Naive thymus-derived CD4-positive, alpha-beta T cell (primary cell): ENCODE measurements at regions of chr17 and their contacts with region 1.

Region 1: GRCh38 chr17:58112970-58113631 is 29.9 kb downstream of the DYNLL2 start:
- DNase-seq: peak; percentile 62 to 86 (median 76)
- ATAC-seq: peak; percentile 96
- H3K4me3 ChIP-seq: no peak overlapping the region
- H3K4me3 Mint-ChIP-seq: no peak overlapping the region
- H3K27ac ChIP-seq: no peak overlapping the region
- H3K27ac Mint-ChIP-seq: peak overlapping the region in 1 of 9 donors; percentile 3
- H3K4me1 ChIP-seq: no peaks in the 10 kb centered on the region
- H3K4me1 Mint-ChIP-seq: peaks cover 0 to 5% (median 0%) of the 10 kb centered on the region in 7 donors
- H3K27me3 ChIP-seq: no peaks in the 10 kb centered on the region
- H3K27me3 Mint-ChIP-seq: peaks cover 0 to 16% (median 8%) of the 10 kb centered on the region in 5 donors

Region 2: GRCh38 chr17:57130761-57131461 is 982.2 kb before region 1 on chr17:
- CTCF ChIA-PET with region 1: no interaction called
- POLR2A ChIA-PET with region 1: no interaction called
- intact Hi-C with region 1: loop called in 1 of 2 experiments (anchors 1 kb)
- DNase-seq: peak; percentile 53 to 82 (median 75)
- ATAC-seq: peak; percentile 96
- H3K4me3 ChIP-seq: no peak overlapping the region
- H3K4me3 Mint-ChIP-seq: peak overlapping the region in 5 of 10 donors; percentile 14 to 53 (median 46)
- H3K27ac ChIP-seq: no peak overlapping the region
- H3K27ac Mint-ChIP-seq: no peak overlapping the region
- H3K4me1 ChIP-seq: peaks cover 0 to 6% of the 10 kb centered on the region in 2 donors
- H3K4me1 Mint-ChIP-seq: peaks cover 4 to 11% (median 8%) of the 10 kb centered on the region in 7 donors
- H3K27me3 ChIP-seq: no peaks in the 10 kb centered on the region
- H3K27me3 Mint-ChIP-seq: no peaks in the 10 kb centered on the region

Region 3: DNA sequence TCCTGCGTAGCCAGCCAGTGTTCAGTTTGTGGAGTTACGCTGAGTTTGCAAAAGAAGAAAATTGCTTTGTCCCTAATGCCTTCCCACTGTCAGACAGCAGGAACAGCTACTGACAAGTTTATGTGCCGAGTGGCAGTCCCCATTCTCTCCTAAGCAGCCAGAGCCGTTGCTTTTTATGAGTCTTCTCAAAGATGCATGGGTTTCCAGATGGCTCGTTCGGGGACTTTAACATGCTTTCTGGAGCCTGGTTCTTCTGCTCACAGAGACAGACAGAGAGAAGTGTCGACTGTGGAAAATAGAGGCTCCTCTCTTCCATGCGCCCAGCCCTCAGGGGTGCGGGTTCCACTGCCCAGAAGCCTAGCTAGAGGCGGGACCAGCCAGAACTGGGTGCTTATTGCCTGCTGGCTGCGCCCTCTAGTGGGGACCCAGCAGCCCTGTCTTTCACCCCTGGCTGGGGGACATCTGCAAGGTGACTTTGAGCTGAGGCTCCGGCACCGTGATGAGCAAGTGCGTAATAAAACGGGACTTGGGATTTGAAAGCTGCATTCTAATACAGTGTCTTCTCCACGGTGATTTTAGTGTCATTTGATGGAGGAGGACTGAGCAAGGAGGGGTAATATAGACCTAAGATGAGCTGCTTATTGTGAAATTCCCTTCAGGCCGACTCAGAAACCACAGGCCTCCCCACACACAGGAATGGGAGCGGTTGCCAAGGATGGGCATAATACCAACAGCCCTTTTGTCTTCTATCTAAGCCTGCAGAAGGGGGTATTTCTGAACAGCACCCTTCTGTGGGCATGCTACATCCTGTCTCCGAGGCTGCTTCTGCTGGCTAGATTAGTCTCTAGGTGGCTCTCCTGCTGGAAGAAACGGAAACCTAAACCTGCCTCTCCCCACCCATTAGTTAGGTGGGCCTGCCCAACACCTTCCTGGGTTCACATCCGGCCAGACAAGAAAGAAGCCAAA is 441.2 kb before region 1 on chr17:
- CTCF ChIA-PET with region 1: no interaction called
- POLR2A ChIA-PET with region 1: no interaction called
- intact Hi-C with region 1: loop called in 1 of 2 experiments (anchors 2 kb)
- DNase-seq: peak; percentile 47 to 73 (median 61)
- ATAC-seq: peak; percentile 92
- H3K4me3 ChIP-seq: peak overlapping the region; percentile 31
- H3K4me3 Mint-ChIP-seq: peak overlapping the region in 5 of 10 donors; percentile 10 to 61 (median 29)
- H3K27ac ChIP-seq: no peak overlapping the region
- H3K27ac Mint-ChIP-seq: peak overlapping the region; percentile 10 to 84 (median 74)
- H3K4me1 ChIP-seq: peaks cover 6 to 29% of the 10 kb centered on the region in 2 donors
- H3K4me1 Mint-ChIP-seq: peaks cover 0 to 26% (median 14%) of the 10 kb centered on the region in 7 donors
- H3K27me3 ChIP-seq: no peaks in the 10 kb centered on the region
- H3K27me3 Mint-ChIP-seq: no peaks in the 10 kb centered on the region

Region 4: DNA sequence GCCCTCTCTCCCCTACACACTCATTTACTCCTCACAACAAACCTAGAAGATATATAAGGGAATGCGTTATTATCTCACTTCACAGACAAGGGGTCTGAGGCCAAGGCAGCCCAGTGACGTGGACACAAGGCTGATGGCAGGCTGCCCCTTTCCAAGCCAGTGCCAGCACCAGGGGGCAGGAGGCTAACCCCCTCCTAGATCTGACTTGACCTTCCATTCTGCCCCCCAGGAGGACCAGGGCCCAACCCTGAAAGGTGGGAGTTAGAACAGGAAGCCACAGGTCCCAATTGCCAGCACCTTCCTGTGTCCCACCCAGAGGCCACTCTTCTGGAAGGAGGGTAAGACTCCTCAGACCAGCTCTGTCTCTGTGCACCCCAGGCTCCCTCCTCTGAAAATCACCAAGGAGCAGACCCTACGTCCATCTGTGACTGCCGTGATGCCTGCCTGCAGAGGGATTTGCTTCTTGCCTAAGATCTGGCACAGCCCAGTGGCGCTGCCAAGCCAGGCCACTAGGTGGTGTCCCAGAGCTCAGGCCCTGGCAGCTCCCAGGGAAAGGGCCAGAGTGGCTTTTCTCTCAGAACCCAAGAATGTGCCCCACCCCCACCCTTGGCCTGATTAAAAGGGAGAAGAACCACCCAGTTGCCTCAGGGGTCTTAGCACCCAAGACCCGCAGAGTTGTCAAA is 220.8 kb before region 1 on chr17:
- CTCF ChIA-PET with region 1: interaction called, 20 read pairs
- POLR2A ChIA-PET with region 1: interaction called, 3 read pairs
- intact Hi-C with region 1: loop called (anchors 1 kb)
- DNase-seq: peak; percentile 44 to 81 (median 65)
- ATAC-seq: peak; percentile 87
- H3K4me3 ChIP-seq: no peak overlapping the region
- H3K4me3 Mint-ChIP-seq: no peak overlapping the region
- H3K27ac ChIP-seq: no peak overlapping the region
- H3K27ac Mint-ChIP-seq: no peak overlapping the region
- H3K4me1 ChIP-seq: no peaks in the 10 kb centered on the region
- H3K4me1 Mint-ChIP-seq: peaks cover 0 to 9% (median 4%) of the 10 kb centered on the region in 7 donors
- H3K27me3 ChIP-seq: no peaks in the 10 kb centered on the region
- H3K27me3 Mint-ChIP-seq: peaks cover 0 to 12% (median 0%) of the 10 kb centered on the region in 5 donors

Region 5: GRCh38 chr17:57995076-57995956 is 117.8 kb before region 1 on chr17:
- CTCF ChIA-PET with region 1: interaction called, 14 read pairs
- POLR2A ChIA-PET with region 1: interaction called, 4 read pairs
- intact Hi-C with region 1: loop called (anchors 1 to 2 kb)
- DNase-seq: peak in 8 of 9 donors; percentile 27 to 66 (median 52)
- ATAC-seq: peak; percentile 91
- H3K4me3 ChIP-seq: no peak overlapping the region
- H3K4me3 Mint-ChIP-seq: peak overlapping the region in 4 of 10 donors; percentile 1 to 30 (median 12)
- H3K27ac ChIP-seq: peak overlapping the region; percentile 56
- H3K27ac Mint-ChIP-seq: peak overlapping the region; percentile 10 to 90 (median 70)
- H3K4me1 ChIP-seq: peaks cover 0 to 19% of the 10 kb centered on the region in 2 donors
- H3K4me1 Mint-ChIP-seq: peaks cover 16 to 61% (median 52%) of the 10 kb centered on the region in 7 donors
- H3K27me3 ChIP-seq: no peaks in the 10 kb centered on the region
- H3K27me3 Mint-ChIP-seq: no peaks in the 10 kb centered on the region

Region 6: DNA sequence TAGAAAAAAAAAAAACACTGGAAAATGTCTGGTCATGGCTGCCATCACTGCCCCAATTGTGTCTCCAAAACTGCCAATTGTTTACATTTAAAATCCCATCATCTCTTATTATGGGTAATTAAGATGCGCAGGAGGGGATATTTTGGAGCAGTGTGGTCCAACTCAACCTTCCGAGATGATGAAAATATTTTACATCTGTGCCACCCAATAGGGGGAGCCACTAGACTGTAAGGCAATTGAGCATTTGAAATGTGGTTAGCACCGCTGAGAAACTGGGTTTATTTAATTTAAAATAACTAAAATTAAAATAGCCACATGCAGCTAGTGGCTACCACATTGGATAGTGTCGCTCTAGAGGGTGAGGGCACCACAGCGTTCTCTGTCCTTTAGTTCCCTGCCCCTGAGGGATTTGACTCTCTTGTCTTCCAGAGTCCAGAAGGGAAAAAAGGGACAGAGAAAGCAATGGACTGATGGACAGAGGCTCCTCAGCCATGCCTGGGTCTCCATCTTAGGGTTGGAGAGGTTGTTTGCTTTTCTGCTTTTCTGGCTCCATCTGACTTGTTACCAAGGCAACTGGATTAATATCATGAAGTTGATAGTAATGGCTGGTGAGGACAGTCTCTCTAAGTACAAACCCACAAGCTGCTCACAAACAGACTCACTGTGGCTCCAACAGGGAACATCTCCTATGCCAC is 164.2 kb after region 1 on chr17:
- CTCF ChIA-PET with region 1: no interaction called
- POLR2A ChIA-PET with region 1: no interaction called
- intact Hi-C with region 1: no loop called
- DNase-seq: peak in 2 of 9 donors; percentile 7 to 22
- ATAC-seq: no peak
- H3K4me3 ChIP-seq: no peak overlapping the region
- H3K4me3 Mint-ChIP-seq: no peak overlapping the region
- H3K27ac ChIP-seq: no peak overlapping the region
- H3K27ac Mint-ChIP-seq: no peak overlapping the region
- H3K4me1 ChIP-seq: no peaks in the 10 kb centered on the region
- H3K4me1 Mint-ChIP-seq: peaks cover 0 to 11% (median 5%) of the 10 kb centered on the region in 7 donors
- H3K27me3 ChIP-seq: no peaks in the 10 kb centered on the region
- H3K27me3 Mint-ChIP-seq: peaks cover 0 to 29% (median 21%) of the 10 kb centered on the region in 5 donors

Region 7: DNA sequence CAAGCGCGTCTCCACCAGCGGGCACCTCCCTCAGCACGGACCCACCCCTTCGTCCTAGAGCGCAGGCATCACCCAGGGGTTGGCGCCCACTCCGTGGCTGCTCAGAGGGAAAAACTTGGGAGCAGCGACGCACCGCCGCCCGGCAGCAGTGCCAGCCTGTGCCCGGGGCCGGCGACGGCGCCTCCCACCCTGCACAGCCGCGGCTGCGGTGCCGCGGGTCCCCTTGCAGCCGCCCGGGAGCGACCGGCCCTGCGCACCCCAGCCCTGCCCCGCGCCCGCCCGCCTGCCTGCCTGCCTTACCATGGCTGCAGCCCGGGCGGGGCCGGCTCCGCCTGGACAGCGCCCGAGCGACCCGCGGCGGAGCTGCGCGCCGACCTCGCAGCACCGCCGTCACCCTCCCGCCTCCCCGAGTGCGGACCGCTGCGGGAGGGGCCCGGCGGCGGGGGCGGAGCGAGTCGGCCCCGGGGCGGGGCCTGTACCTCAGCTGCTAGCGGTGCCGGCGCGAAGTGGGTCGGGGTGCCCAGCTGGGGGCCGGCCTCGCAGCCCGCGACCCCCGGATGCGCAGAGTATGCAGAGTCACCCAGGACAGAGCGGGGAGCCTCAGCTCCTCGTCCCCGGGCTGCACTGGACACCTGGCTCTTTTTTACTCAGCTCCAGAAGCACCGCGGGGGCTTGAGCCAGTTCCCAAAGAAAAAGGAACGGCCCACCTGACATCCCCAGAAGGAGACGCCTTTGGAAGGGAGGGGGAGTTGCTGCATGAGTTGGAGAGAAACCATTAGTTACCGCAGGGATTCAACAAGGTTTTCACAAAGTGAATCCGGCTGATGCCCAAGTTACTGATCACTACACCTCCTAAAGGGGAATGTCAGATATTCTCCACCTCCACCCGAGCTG is 418.8 kb after region 1 on chr17:
- CTCF ChIA-PET with region 1: no interaction called
- POLR2A ChIA-PET with region 1: no interaction called
- intact Hi-C with region 1: no loop called
- DNase-seq: peak; percentile 34 to 82 (median 55)
- ATAC-seq: peak; percentile 91
- H3K4me3 ChIP-seq: peak overlapping the region; percentile 50
- H3K4me3 Mint-ChIP-seq: peak overlapping the region; percentile 49 to 79 (median 69)
- H3K27ac ChIP-seq: no peak overlapping the region
- H3K27ac Mint-ChIP-seq: no peak overlapping the region
- H3K4me1 ChIP-seq: peaks cover 0 to 4% of the 10 kb centered on the region in 2 donors
- H3K4me1 Mint-ChIP-seq: peaks cover 0 to 23% (median 4%) of the 10 kb centered on the region in 7 donors
- H3K27me3 ChIP-seq: peaks cover 0 to 3% of the 10 kb centered on the region in 2 donors
- H3K27me3 Mint-ChIP-seq: peaks cover 16 to 73% (median 24%) of the 10 kb centered on the region in 5 donors